HepG2 (cell line): ENCODE measurements at regions of chrX and their contacts with region 1.

Region 1: GRCh38 chrX:45110494-45110893 is 90.2 kb downstream of the DIPK2B start:
- DNase-seq: no peak
- ATAC-seq: no peak
- H3K4me3 ChIP-seq: no peak overlapping the region
- H3K27ac ChIP-seq: no peak overlapping the region
- H3K4me1 ChIP-seq: no peaks in the 10 kb centered on the region
- H3K27me3 ChIP-seq: no peaks in the 10 kb centered on the region
- CTCF ChIP-seq: no peak
- EP300 ChIP-seq: no peak
- POLR2A ChIP-seq: no peak
- RAD21 ChIP-seq: no peak

Region 2: DNA sequence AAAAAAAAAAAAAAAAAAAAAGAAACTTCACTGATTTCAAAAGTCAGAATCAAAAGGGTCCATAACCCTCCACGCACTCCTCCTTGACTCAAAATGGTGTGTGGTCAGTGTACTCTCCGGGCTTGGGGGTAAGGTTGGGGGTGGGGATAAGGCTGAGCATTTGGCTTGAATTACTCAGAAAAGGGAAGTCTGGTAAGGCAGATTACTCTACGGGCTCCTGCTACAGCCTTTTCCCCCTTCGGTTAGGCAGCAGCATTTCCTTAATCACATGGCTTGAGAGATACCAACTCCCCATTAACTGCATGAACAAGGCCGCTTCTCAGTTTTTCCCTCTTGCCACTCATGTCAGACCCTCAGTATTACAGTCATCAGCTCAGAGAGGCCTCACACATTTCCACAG is 402.0 kb before region 1 on chrX:
- CTCF ChIA-PET with region 1: no interaction called
- POLR2A ChIA-PET with region 1: no interaction called
- in situ Hi-C with region 1: no loop called
- intact Hi-C with region 1: no loop called
- DNase-seq: no peak
- ATAC-seq: no peak
- H3K4me3 ChIP-seq: no peak overlapping the region
- H3K27ac ChIP-seq: no peak overlapping the region
- H3K4me1 ChIP-seq: peaks cover 20% of the 10 kb centered on the region
- H3K27me3 ChIP-seq: no peaks in the 10 kb centered on the region
- CTCF ChIP-seq: no peak
- EP300 ChIP-seq: no peak
- POLR2A ChIP-seq: no peak
- RAD21 ChIP-seq: no peak

Region 3: DNA sequence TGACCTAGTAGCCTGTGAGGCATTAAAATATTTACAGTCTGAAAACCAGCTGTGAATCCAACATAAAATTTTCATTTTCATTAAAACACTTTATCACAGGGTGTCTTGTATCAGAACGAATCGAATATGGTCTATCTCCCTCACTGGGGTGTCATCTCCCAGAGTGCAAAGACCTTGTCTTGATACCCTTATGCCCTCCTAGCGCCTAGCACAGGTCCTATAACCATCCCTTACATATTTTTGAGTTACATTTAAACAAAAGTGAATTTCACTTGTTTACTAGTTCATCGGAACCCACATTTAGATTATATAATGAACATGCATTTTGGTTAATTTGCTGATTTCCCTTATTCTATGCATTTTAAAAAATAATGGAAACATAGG is 76.1 kb after region 1 on chrX:
- CTCF ChIA-PET with region 1: no interaction called
- POLR2A ChIA-PET with region 1: no interaction called
- in situ Hi-C with region 1: no loop called
- intact Hi-C with region 1: loop called (anchors 10 kb)
- DNase-seq: no peak
- ATAC-seq: no peak; the same call in 2 of the 3 replicates
- H3K4me3 ChIP-seq: no peak overlapping the region; a peak in 1 of 6 replicates
- H3K27ac ChIP-seq: no peak overlapping the region
- H3K4me1 ChIP-seq: no peaks in the 10 kb centered on the region
- H3K27me3 ChIP-seq: no peaks in the 10 kb centered on the region
- CTCF ChIP-seq: no peak
- EP300 ChIP-seq: no peak
- POLR2A ChIP-seq: no peak
- RAD21 ChIP-seq: no peak